CD4-positive, alpha-beta T cell (primary cell): ENCODE measurements at regions of chr1 and their contacts with region 1.

Region 1: GRCh38 chr1:93078986-93079654 is at the start of gene MTF2:
- DNase-seq: peak; percentile 87 to 96 (median 92)
- ATAC-seq: peak; percentile 85
- H3K4me3 ChIP-seq: peak within 1 kb of the TSS; percentile 86
- H3K4me3 Mint-ChIP-seq: peak within 1 kb of the TSS; percentile 99
- H3K27ac ChIP-seq: peak within 1 kb of the TSS; percentile 81 to 82
- H3K27ac Mint-ChIP-seq: peak within 1 kb of the TSS; percentile 96
- H3K4me1 ChIP-seq: peaks cover 17% of the 10 kb centered on the region
- H3K4me1 Mint-ChIP-seq: peaks cover 61% of the 10 kb centered on the region
- H3K27me3 ChIP-seq: no peaks in the 10 kb centered on the region
- H3K27me3 Mint-ChIP-seq: no peaks in the 10 kb centered on the region
- CTCF ChIP-seq: no peak
- total RNA-seq, gene MTF2: 37.9 to 39.3 TPM

Region 2: GRCh38 chr1:92831762-92832536 is 247.2 kb before region 1 on chr1 and contains the start of gene RPL5:
- CTCF ChIA-PET with region 1: interaction called, 6 read pairs
- POLR2A ChIA-PET with region 1: interaction called, 34 read pairs
- intact Hi-C with region 1: no loop called
- DNase-seq: peak; percentile 94 to 99 (median 96)
- ATAC-seq: peak; percentile 81
- H3K4me3 ChIP-seq: peak within 1 kb of the TSS; percentile 68
- H3K4me3 Mint-ChIP-seq: peak within 1 kb of the TSS; percentile 96
- H3K27ac ChIP-seq: peak within 1 kb of the TSS; percentile 85 to 92
- H3K27ac Mint-ChIP-seq: peak within 1 kb of the TSS; percentile 97
- H3K4me1 ChIP-seq: peaks cover 31% of the 10 kb centered on the region
- H3K4me1 Mint-ChIP-seq: peaks cover 54% of the 10 kb centered on the region
- H3K27me3 ChIP-seq: no peaks in the 10 kb centered on the region
- H3K27me3 Mint-ChIP-seq: no peaks in the 10 kb centered on the region
- CTCF ChIP-seq: peak; percentile 97
- total RNA-seq, gene RPL5: 1,712 to 1,770 TPM

Region 3: DNA sequence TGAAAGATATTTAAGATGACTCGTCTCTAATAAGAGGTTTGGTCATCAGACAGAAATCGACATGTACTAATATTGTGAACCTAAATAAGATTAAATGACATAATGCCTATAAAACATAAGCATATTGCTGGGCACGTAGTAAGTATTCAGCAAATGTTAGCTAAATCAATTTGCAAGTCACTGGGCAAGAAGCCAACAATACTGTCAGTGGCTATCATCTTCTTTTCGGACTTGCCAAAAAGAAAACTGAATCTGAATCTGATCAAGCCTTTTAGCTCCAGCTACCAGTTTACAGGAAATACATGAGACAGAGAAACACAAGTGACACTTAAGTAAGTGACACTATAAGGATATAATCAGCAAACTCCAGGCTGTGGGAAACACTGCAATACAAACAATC is 201.3 kb before region 1 on chr1:
- CTCF ChIA-PET with region 1: no interaction called
- POLR2A ChIA-PET with region 1: no interaction called
- intact Hi-C with region 1: no loop called
- DNase-seq: peak in 2 of 14 experiments; percentile 24 to 53
- ATAC-seq: peak; percentile 41
- H3K4me3 ChIP-seq: no peak overlapping the region
- H3K4me3 Mint-ChIP-seq: peak overlapping the region; percentile 23
- H3K27ac ChIP-seq: peak overlapping the region; percentile 19 to 33
- H3K27ac Mint-ChIP-seq: peak overlapping the region; percentile 86
- H3K4me1 ChIP-seq: peaks cover 7% of the 10 kb centered on the region
- H3K4me1 Mint-ChIP-seq: peaks cover 43% of the 10 kb centered on the region
- H3K27me3 ChIP-seq: no peaks in the 10 kb centered on the region
- H3K27me3 Mint-ChIP-seq: no peaks in the 10 kb centered on the region
- CTCF ChIP-seq: no peak

Region 4: GRCh38 chr1:93001893-93002292 is 77.2 kb before region 1 on chr1:
- CTCF ChIA-PET with region 1: no interaction called
- POLR2A ChIA-PET with region 1: no interaction called
- intact Hi-C with region 1: no loop called
- DNase-seq: no peak
- ATAC-seq: no peak
- H3K4me3 ChIP-seq: no peak overlapping the region
- H3K4me3 Mint-ChIP-seq: no peak overlapping the region
- H3K27ac ChIP-seq: no peak overlapping the region
- H3K27ac Mint-ChIP-seq: no peak overlapping the region
- H3K4me1 ChIP-seq: no peaks in the 10 kb centered on the region
- H3K4me1 Mint-ChIP-seq: peaks cover 9% of the 10 kb centered on the region
- H3K27me3 ChIP-seq: peaks cover 0 to 4% of the 10 kb centered on the region in 2 experiments
- H3K27me3 Mint-ChIP-seq: no peaks in the 10 kb centered on the region
- CTCF ChIP-seq: no peak

Region 5: DNA sequence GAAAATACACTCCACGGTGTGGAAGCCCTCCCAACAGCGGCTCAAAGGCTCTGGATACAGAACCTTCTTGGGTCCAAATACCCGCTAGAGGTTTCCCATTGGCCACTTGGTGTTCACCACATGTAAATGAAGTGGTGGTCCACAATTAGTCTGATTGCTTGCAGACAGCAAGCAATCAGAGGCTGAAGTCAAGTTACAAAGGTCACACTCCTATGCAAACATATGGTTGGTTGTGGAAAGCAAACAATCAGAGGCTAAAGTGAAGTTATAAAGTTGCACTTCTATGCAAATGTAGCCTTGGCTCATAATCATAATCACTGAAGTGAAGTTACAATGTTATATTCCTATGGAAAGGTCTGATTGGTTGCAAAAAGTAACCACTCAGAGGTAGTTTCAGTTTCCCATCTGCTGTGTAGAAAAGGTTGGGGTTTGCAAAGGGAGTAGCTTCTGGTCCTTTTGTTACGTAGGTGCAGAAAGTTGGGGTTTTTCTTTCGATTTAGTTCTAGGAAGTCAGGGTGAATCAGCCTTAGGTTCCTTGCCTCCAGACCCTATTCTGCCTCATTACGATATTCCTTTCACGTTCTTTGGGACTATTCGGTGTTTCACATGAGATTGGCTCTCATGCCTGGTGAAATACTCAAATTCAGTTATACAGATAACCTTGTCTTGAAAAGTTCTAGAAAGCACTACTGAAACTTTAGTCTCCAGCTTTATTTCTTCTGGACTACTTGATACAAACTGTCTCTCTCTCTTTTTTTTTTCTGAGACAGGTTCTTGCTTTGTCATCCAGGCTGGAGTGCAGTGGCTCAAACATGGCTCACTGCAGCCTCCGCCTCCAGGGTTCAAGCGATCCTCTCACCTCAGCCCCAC is 36.7 kb before region 1 on chr1:
- CTCF ChIA-PET with region 1: interaction called, 9 read pairs
- POLR2A ChIA-PET with region 1: interaction called, 42 read pairs
- intact Hi-C with region 1: loop called (anchors 2 to 5 kb)
- DNase-seq: peak in 6 of 14 experiments; percentile 2 to 93 (median 62)
- ATAC-seq: peak; percentile 98
- H3K4me3 ChIP-seq: peak overlapping the region; percentile 45
- H3K4me3 Mint-ChIP-seq: peak overlapping the region; percentile 66
- H3K27ac ChIP-seq: peak overlapping the region; percentile 75 to 85
- H3K27ac Mint-ChIP-seq: peak overlapping the region; percentile 84
- H3K4me1 ChIP-seq: peaks cover 10% of the 10 kb centered on the region
- H3K4me1 Mint-ChIP-seq: peaks cover 16% of the 10 kb centered on the region
- H3K27me3 ChIP-seq: no peaks in the 10 kb centered on the region
- H3K27me3 Mint-ChIP-seq: no peaks in the 10 kb centered on the region
- CTCF ChIP-seq: no peak

Region 6: DNA sequence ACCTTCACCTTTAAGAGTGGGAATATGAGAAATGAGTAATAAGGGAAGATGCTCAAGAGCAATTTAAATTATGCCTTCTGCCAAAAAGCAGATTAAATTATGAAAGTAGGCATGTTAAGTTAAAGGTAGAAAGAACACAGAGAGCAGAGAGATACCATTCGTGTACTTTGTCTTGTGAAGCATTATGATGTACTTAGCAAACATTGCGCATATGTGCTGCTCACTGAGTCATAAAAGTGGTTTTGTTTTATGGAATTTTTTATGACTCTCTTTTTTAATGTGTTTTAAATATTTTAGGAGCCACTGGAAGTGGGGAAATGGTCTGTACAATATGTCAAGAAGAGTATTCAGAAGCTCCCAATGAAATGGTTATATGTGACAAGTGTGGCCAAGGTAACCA is 35.3 kb after region 1 on chr1:
- CTCF ChIA-PET with region 1: interaction called, 3 read pairs
- POLR2A ChIA-PET with region 1: interaction called, 4 read pairs
- intact Hi-C with region 1: loop called in 1 of 2 experiments (anchors 5 kb)
- DNase-seq: no peak
- ATAC-seq: no peak
- H3K4me3 ChIP-seq: no peak overlapping the region
- H3K4me3 Mint-ChIP-seq: no peak overlapping the region
- H3K27ac ChIP-seq: no peak overlapping the region
- H3K27ac Mint-ChIP-seq: no peak overlapping the region
- H3K4me1 ChIP-seq: no peaks in the 10 kb centered on the region
- H3K4me1 Mint-ChIP-seq: peaks cover 27% of the 10 kb centered on the region
- H3K27me3 ChIP-seq: no peaks in the 10 kb centered on the region
- H3K27me3 Mint-ChIP-seq: no peaks in the 10 kb centered on the region
- CTCF ChIP-seq: no peak

Region 7: GRCh38 chr1:93179886-93180722 is 101.0 kb after region 1 on chr1 and contains the start of gene TMED5:
- CTCF ChIA-PET with region 1: interaction called, 3 read pairs
- POLR2A ChIA-PET with region 1: interaction called, 8 read pairs
- intact Hi-C with region 1: loop called (anchors 2 kb)
- DNase-seq: peak; percentile 88 to 99 (median 94)
- ATAC-seq: peak; percentile 78
- H3K4me3 ChIP-seq: peak within 1 kb of the TSS; percentile 91
- H3K4me3 Mint-ChIP-seq: peak within 1 kb of the TSS; percentile 93
- H3K27ac ChIP-seq: peak within 1 kb of the TSS; percentile 97 to 98
- H3K27ac Mint-ChIP-seq: peak within 1 kb of the TSS; percentile 95
- H3K4me1 ChIP-seq: peaks cover 25% of the 10 kb centered on the region
- H3K4me1 Mint-ChIP-seq: peaks cover 52% of the 10 kb centered on the region
- H3K27me3 ChIP-seq: no peaks in the 10 kb centered on the region
- H3K27me3 Mint-ChIP-seq: no peaks in the 10 kb centered on the region
- CTCF ChIP-seq: peak; percentile 14
- total RNA-seq, gene TMED5: 42.3 to 43.2 TPM

Region 8: DNA sequence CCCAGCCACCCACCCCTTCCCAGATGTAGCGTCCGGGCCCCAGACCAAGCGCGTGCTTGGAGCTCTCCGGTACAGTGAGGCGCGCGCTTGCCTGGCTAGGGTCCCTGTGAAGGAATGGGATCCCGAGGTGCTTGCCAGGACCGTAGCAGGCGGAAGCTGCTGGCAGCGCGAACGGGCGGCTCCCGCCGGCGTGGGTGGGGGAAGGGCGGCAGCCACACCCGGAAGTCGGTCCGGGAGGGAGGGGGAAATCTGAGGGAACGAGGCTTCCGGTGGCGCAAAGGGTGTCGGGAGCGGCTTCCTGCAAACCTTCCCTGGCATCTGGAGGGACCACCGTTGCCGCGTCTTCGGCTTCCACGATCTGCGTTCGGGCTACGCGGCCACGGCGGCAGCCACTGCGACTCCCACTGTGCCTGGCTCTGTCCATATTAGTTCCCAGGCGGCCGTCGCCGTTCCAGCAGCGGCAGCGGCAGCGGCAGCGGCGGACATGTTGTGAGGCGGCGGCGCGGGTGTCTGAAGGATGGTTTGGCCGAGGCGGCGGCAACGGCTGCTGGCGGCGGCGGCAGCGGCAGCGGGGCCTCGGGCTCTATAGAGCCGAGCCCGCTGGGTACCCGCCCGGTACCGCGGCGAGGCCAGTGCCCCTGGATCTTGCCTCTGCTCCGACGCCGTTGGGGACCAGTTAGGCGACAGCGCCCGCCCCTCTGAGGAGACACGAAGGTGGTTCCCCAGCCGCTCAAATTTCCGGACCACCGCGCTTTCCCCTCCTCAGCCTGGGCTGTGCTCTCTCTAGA is 266.7 kb after region 1 on chr1 and contains the start of gene DR1:
- CTCF ChIA-PET with region 1: interaction called, 3 read pairs
- POLR2A ChIA-PET with region 1: interaction called, 11 read pairs
- intact Hi-C with region 1: loop called (anchors 5 to 10 kb)
- DNase-seq: peak; percentile 85 to 94 (median 87)
- ATAC-seq: peak; percentile 79
- H3K4me3 ChIP-seq: peak within 1 kb of the TSS; percentile 90
- H3K4me3 Mint-ChIP-seq: peak within 1 kb of the TSS; percentile 99
- H3K27ac ChIP-seq: peak within 1 kb of the TSS; percentile 87 to 94
- H3K27ac Mint-ChIP-seq: peak within 1 kb of the TSS; percentile 96
- H3K4me1 ChIP-seq: peaks cover 9% of the 10 kb centered on the region
- H3K4me1 Mint-ChIP-seq: peaks cover 61% of the 10 kb centered on the region
- H3K27me3 ChIP-seq: no peaks in the 10 kb centered on the region
- H3K27me3 Mint-ChIP-seq: no peaks in the 10 kb centered on the region
- CTCF ChIP-seq: no peak
- total RNA-seq, gene DR1: 51.4 to 54.4 TPM

Region 9: DNA sequence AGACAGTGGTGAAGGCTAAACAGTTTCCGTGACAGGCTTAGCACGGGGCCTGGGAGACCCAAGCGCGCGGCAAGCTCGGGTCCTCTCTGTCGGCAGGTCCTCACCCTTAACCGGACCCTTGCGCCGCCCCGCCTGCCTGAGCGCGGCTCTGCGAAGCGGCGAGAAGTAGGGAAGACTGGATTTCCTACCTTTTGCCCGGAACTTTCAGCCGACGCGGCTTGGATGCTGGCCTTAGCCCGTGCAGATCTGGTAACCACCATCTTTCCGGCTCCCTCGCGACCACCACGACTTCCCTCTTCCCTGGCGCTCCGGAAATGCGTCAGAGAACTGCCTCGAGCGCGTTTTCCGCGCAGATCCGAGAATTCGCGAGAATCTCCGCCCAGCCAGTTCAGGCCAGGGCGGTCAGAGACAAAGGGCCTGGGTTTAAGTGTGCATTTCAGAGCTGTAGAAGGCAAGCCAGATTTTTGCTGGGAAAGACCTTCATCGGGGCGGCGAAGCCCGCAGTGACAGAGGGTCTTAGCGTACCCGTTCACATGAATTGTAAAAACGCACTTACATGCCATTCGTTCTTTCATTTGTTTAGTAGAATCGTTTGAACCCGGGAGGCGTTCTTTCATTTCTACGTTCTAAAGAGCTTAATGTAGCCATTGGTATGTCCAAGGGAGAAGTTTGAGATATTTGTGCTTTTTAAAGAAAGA is 799.9 kb after region 1 on chr1 and contains the start of gene DNTTIP2:
- CTCF ChIA-PET with region 1: no interaction called
- POLR2A ChIA-PET with region 1: interaction called, 4 read pairs
- intact Hi-C with region 1: loop called in 1 of 2 experiments (anchors 10 kb)
- DNase-seq: peak; percentile 78 to 93 (median 82)
- ATAC-seq: peak; percentile 82
- H3K4me3 ChIP-seq: peak within 1 kb of the TSS; percentile 91
- H3K4me3 Mint-ChIP-seq: peak within 1 kb of the TSS; percentile 100
- H3K27ac ChIP-seq: peak within 1 kb of the TSS; percentile 85 to 94
- H3K27ac Mint-ChIP-seq: peak within 1 kb of the TSS; percentile 98
- H3K4me1 ChIP-seq: peaks cover 26% of the 10 kb centered on the region
- H3K4me1 Mint-ChIP-seq: peaks cover 45% of the 10 kb centered on the region
- H3K27me3 ChIP-seq: no peaks in the 10 kb centered on the region
- H3K27me3 Mint-ChIP-seq: no peaks in the 10 kb centered on the region
- CTCF ChIP-seq: no peak
- total RNA-seq, gene DNTTIP2: 110 to 120 TPM